Cardiac septum (tissue), 1 donor: ENCODE measurements at regions of chr6 and their contacts with region 1.

Region 1: GRCh38 chr6:167826230-167826895 is 348 bp upstream of the AFDN start:
- DNase-seq: peak; percentile 84

Region 2: DNA sequence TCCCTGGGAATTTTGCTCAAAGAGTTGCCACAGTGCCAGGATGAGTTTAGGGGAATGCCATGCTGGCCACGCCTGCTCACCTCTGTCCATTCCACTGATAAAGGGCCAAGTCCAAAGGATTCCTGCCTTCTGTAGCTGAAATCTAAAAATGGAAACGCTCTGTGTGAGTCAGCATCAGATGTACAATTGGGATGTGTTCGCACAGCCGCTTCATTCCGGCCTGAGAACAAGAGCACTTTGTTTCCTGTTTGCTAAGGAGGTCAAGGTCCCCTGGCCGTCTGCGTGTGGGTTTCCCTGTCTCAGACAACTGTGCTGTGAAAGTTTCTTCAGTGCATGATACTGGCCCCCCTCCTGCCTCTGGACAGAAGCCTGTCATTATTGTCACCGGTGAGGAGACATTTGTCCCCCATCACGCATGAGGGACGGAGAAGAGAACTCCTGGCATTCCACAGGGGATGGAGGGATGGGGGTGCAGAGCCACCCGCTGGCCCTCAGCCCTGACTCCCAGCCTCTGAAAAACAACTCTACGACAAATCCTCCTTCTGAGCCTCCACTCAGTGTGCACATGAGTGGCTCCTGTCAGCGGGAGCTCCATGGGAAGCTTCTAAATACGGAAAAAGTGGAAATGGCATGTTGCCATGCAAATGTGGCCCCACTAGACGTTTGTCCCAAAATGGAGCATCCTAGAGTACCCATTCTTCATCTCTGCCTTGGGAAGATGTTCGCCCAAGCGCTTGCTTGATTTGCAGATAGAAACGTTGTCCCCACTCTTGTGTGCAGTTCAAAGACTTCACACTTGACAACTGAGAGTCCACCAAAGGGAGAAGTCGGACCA is 143.1 kb before region 1 on chr6:
- intact Hi-C with region 1: loop called (anchors 5 kb)
- DNase-seq: peak; percentile 87

Region 3: GRCh38 chr6:168050881-168051586 is 224.7 kb after region 1 on chr6:
- intact Hi-C with region 1: no loop called
- DNase-seq: no peak